ENCODE measurements at regions of chr5 and their contacts with region 1.

Region 1: DNA sequence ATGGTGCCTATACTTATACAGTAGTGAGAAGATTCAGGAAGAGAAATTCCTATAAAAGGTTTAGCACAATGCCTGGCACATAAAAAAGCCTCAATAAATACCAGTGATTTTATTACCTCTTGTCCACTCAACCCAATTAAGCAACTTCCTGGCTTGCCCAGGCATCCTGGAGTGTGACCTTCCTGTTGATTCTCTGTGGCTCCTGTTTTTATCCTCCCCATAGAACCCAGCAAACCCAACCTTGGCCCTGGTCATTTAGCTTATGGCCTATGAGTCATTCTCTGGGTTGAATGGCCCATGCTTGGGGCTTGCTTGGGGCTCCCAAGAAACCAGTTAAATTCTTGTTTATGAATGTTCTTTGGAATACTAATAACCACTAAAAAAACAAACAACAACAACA is 21.4 kb upstream of the SPARC start:
- DNase-seq: no peak
- H3K4me3 ChIP-seq: no peak overlapping the region
- H3K27ac ChIP-seq: no peak overlapping the region
- H3K4me1 ChIP-seq: peaks cover 0 to 3% (median 0%) of the 10 kb centered on the region in 4 experiments
- H3K27me3 ChIP-seq: no peaks in the 10 kb centered on the region

Region 2: GRCh38 chr5:151719228-151720000 is 11.3 kb after region 1 on chr5:
- CTCF ChIA-PET with region 1: interaction called, 12 read pairs
- POLR2A ChIA-PET with region 1: no interaction called
- DNase-seq: peak; percentile 19 to 50 (median 39)
- H3K4me3 ChIP-seq: no peak overlapping the region
- H3K27ac ChIP-seq: no peak overlapping the region
- H3K4me1 ChIP-seq: peaks cover 6 to 18% (median 10%) of the 10 kb centered on the region in 4 experiments
- H3K27me3 ChIP-seq: no peaks in the 10 kb centered on the region

Region 3: DNA sequence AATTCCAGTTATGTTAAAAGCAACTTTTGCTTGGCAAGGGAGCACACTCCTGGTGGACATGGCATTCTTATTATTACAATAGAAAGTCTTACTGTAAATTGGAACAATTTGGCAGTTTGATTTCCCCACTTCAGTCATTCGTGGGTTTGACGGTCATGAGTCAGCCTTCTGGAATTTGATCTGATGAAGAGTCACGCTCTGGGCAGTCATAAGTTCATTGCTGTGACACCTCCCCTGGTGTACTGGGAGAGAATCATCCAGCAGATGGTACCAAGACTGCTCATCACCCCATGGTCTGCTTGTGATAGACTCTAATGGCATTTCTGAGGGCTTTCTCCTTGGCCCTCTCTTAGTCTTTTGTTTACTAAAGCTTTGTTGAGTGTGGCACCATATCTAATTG is 162.7 kb after region 1 on chr5:
- CTCF ChIA-PET with region 1: no interaction called
- POLR2A ChIA-PET with region 1: no interaction called
- DNase-seq: no peak
- H3K4me3 ChIP-seq: no peak overlapping the region
- H3K27ac ChIP-seq: no peak overlapping the region
- H3K4me1 ChIP-seq: no peaks in the 10 kb centered on the region
- H3K27me3 ChIP-seq: peaks cover 0 to 2% (median 0%) of the 10 kb centered on the region in 5 experiments

Measured in common myeloid progenitor, CD34-positive (primary cell).